ENCODE measurements at regions of chr16 and their contacts with region 1.

Region 1: DNA sequence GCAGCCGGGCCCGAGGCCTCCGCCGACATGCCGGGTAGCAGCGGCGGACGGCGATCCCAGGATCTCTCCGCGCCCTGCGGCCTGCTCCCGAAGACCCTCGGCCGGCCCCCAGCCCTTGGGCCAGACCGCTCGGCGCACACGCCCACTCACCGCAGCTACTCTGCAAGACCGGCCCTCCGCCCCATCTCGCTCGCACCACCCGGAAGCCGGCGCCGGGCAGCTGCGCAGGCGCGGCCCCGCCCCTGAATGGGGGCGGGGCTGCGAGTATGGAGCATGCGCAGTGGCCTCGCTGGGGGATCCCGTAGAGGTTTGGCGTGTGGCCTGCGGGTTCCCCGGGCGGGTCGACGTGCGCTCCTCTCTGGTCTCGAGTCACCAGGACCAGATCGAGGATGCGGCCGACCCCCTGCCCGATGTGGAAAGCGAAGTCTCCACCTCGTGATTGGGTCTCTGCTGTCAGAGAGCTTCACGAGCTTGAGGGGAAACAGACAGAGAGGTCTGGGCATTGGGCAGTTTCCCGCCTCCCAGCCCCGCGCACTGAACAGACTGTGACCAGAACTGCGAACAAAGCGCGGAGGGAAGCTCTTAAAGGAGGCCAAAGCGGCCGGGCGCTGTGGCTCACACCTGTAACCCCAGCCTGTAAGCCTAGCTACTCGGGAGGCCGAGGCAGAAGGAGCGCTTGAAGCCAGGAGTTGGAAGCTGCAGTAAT is at the start of gene KCTD13:
- DNase-seq: peak; percentile 87
- H3K4me3 ChIP-seq: peak within 1 kb of the TSS; percentile 91
- H3K27ac ChIP-seq: peak within 1 kb of the TSS; percentile 32
- H3K4me1 ChIP-seq: peaks cover 25% of the 10 kb centered on the region
- CTCF ChIP-seq: no peak
- total RNA-seq, gene KCTD13: 14.4 and 15.9 TPM in 2 replicates

Region 2: GRCh38 chr16:29877266-29877961 is 48.7 kb before region 1 on chr16:
- CTCF ChIA-PET with region 1: no interaction called
- POLR2A ChIA-PET with region 1: no interaction called
- intact Hi-C with region 1: no loop called
- DNase-seq: peak; percentile 95
- H3K4me3 ChIP-seq: peak overlapping the region; percentile 20
- H3K27ac ChIP-seq: no peak overlapping the region
- H3K4me1 ChIP-seq: peaks cover 15% of the 10 kb centered on the region
- CTCF ChIP-seq: no peak

Region 3: DNA sequence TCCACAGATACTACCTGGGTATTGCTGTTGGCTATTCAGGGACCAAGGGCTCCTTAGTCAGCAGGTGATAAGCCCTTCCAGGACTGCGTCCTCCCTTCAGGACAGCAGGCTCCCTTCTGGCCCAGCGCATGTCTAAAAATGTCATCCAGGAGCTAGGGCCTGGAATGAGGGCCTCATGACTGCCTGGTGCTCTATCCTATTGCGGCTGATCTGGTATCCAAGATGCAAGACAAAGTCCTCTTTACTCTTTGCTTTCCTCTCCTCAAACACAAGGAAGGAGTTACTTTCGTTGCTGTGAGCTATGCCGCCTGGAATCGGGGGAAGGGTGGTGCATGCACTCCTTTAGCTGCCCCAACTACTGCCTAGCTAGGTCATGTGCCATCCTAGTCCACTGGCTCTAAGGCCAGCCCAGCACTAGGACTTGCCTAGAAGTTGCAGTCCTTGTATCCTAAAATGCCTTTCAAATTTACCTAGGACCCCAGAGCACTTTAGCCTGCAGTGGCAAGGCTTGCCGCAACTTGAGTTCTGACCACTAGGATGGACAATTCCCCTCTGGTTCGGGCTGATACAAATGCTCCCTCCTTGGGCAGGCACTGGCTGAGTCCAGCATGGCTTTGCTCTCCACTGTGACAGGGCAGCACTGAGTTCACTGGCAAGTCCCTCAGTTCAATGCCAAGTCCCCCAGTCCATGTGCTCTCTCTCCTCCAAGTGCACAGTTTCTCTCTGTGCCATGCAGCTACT is 25.6 kb after region 1 on chr16:
- CTCF ChIA-PET with region 1: no interaction called
- POLR2A ChIA-PET with region 1: interaction called, 5 read pairs
- intact Hi-C with region 1: loop called (anchors 1 kb)
- DNase-seq: no peak
- H3K4me3 ChIP-seq: no peak overlapping the region
- H3K27ac ChIP-seq: no peak overlapping the region
- H3K4me1 ChIP-seq: peaks cover 30% of the 10 kb centered on the region
- CTCF ChIP-seq: no peak

Region 4: DNA sequence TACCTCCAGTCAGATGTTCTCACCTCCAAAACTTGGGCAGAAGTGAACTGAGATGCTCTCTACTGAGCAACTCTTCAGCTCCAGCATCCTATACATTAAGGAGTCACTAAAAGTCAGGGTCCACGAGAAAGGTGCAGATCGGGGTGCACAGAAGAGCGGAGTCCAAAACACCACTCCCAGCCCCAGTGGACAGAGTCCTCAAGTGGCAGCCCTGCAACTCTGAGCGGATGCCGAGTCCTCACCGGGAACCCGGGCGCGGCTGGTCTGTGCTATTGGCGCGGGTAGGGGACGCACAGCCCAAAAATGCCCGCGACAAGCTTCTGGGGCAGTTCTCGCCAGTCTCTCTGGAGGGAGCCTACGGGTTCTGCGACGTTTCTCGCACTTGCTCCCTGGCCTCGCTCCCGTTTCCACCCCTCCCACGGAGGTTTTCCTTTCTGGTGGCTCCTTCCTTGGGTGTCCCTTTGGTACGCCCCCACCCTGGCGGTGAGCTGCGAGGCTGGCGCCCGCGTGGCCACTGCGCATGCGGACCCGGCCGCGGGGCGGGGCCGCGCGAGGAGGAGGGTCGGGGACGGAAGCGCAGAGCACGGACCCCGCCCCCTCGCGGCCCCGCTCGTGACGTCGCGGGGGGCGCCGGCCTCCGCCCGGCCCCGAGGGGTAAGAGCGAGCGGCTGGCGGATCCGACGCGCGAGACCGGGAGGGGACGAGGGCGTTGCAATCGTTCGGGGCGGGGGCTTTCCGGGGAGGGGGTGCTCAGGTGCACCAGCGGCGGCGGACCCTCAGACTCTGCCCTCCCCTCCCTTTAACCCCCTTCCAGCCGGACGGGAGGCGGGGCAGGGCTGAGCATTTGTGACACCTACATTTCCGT is 35.6 kb after region 1 on chr16 and contains the start of gene TMEM219:
- CTCF ChIA-PET with region 1: no interaction called
- POLR2A ChIA-PET with region 1: interaction called, 17 read pairs
- intact Hi-C with region 1: no loop called
- DNase-seq: peak; percentile 94
- H3K4me3 ChIP-seq: peak within 1 kb of the TSS; percentile 75
- H3K27ac ChIP-seq: peak within 1 kb of the TSS; percentile 56
- H3K4me1 ChIP-seq: peaks cover 17% of the 10 kb centered on the region
- CTCF ChIP-seq: 0 out of 2 replicates have a peak, but pooled peaks have one; percentile 25
- total RNA-seq, gene TMEM219: 75.7 and 94.1 TPM in 2 replicates

Region 5: DNA sequence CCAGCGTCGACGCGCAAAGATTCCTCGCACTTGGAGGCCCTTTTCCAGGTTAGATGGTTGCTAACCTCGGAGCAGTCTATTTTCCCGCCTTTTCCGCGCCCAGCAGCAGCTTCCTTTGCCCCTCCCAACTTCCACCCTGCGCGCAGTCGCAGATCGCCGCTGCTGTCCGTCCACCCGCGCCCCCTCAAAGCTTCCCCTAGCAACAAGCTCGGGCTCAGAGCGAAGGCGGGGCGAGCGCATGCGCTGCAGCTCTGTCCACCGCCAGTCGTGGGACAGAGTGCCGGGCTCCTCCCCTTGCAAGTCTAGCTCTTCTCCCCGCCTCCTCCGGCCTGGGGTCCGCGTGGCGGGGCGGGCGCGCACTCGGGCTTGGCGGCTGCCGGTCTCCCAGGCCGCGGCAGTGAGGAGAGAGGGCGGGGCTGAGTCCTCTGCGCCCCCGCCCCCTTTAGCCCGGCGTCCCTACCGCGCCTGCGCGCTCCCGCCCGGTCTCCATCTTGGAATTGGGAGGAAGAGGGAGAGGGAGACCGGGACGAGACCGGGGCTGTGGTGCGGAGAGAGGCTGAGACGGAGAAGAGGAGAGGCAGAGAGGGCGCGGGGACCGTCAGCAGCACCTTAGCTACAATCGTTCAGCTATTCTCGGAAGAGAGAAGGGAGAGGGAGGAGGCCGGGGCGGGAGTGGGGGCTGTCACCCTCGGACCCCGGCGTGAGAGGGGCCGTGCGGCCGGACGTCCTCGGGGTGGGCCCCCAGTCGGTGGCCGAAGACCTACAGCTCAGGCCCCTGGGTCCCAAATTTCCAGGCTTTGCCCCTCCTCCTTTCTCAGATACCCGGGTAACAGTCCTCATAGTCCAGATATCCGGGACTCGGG is 47.5 kb after region 1 on chr16 and contains the start of gene TAOK2:
- CTCF ChIA-PET with region 1: interaction called, 4 read pairs
- POLR2A ChIA-PET with region 1: interaction called, 13 read pairs
- intact Hi-C with region 1: loop called (anchors 1 kb)
- DNase-seq: peak; percentile 99
- H3K4me3 ChIP-seq: peak within 1 kb of the TSS; percentile 99
- H3K27ac ChIP-seq: peak within 1 kb of the TSS; percentile 69
- H3K4me1 ChIP-seq: peaks cover 34% of the 10 kb centered on the region
- CTCF ChIP-seq: no peak
- total RNA-seq, gene TAOK2: 31.7 and 33.3 TPM in 2 replicates

Region 6: GRCh38 chr16:29985271-29985811 is 59.2 kb after region 1 on chr16:
- CTCF ChIA-PET with region 1: no interaction called
- POLR2A ChIA-PET with region 1: no interaction called
- intact Hi-C with region 1: no loop called
- DNase-seq: no peak
- H3K4me3 ChIP-seq: no peak overlapping the region
- H3K27ac ChIP-seq: no peak overlapping the region
- H3K4me1 ChIP-seq: no peaks in the 10 kb centered on the region
- CTCF ChIP-seq: no peak

Region 7: GRCh38 chr16:29995911-29996772 is 70.0 kb after region 1 on chr16 and contains the start of gene INO80E:
- CTCF ChIA-PET with region 1: no interaction called
- POLR2A ChIA-PET with region 1: interaction called, 11 read pairs
- intact Hi-C with region 1: loop called (anchors 2 kb)
- DNase-seq: peak; percentile 99
- H3K4me3 ChIP-seq: peak within 1 kb of the TSS; percentile 85
- H3K27ac ChIP-seq: peak within 1 kb of the TSS; percentile 90
- H3K4me1 ChIP-seq: peaks cover 27% of the 10 kb centered on the region
- CTCF ChIP-seq: no peak
- total RNA-seq, gene INO80E: 88.0 and 94.7 TPM in 2 replicates

Measured in OCI-LY7 (cell line).